Breast epithelium (tissue), 4 donors: ENCODE measurements at regions of chr20 and their contacts with region 1.

Region 1: DNA sequence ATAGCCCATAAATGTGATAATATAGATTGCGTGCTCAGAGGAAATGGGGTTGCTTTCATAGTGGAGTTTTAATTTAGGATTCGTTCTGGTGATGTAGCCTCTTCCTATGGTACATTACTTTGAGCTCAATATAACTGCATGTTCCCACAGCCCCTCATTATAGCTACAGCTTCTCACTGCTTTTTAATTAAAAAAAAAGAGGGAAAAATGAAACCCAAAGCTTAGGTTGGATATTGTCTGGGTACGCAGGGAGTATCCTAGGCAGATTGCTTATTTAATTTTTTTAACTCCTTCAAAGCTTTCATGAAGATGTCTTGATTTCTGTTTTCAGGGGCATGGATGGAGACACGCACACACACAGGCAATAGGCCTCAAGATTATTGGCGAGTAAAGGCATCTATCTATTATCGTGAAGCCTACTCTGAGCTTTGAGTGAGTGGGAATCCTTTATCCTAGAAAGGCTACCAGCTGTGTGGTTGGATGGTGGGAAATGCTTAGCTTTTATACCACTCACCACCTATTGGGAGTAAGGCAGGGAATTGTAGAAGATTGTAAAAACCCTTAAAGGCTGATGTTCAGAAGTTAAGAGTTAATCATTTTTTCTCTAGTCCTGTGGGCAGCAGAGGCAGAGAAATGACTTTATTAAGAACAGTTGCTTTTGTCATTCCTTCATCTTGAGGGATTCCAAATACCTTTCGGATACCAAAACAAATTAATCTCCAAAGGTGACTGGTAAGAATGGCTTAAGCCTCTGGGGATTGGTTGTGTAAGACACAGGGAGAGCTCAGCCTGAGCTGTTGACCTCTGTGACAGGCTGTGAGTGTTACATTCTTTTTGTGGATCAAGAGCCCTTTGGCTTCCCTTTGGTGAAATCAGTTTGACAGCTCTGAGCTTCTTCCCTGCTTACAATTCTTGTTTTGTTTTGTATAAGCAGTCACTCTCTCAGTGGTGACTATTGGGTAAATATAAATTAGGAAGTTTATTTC is 33.4 kb downstream of the CTNNBL1 start:
- DNase-seq: no peak
- H3K4me3 ChIP-seq: no peak overlapping the region
- H3K27ac ChIP-seq: no peak overlapping the region
- H3K4me1 ChIP-seq: no peaks in the 10 kb centered on the region
- H3K27me3 ChIP-seq: no peaks in the 10 kb centered on the region
- CTCF ChIP-seq: no peak
- POLR2A ChIP-seq: no peak

Region 2: GRCh38 chr20:38559764-38560163 is 832.5 kb after region 1 on chr20:
- intact Hi-C with region 1: loop called (anchors 5 kb)
- DNase-seq: no peak
- H3K4me3 ChIP-seq: no peak overlapping the region
- H3K27ac ChIP-seq: no peak overlapping the region
- H3K4me1 ChIP-seq: no peaks in the 10 kb centered on the region
- H3K27me3 ChIP-seq: no peaks in the 10 kb centered on the region
- CTCF ChIP-seq: no peak
- POLR2A ChIP-seq: no peak